IMR-90 (cell line): ENCODE measurements at regions of chr16 and their contacts with region 1.

Region 1: GRCh38 chr16:64455254-64455653 is 666.6 kb downstream of the CDH11 start:
- DNase-seq: peak; percentile 53
- ATAC-seq: peak; percentile 83
- H3K4me3 ChIP-seq: no peak overlapping the region
- H3K27ac ChIP-seq: no peak overlapping the region
- H3K4me1 ChIP-seq: no peaks in the 10 kb centered on the region
- H3K27me3 ChIP-seq: no peaks in the 10 kb centered on the region
- CTCF ChIP-seq: peak; percentile 46
- POLR2A ChIP-seq: no peak
- RAD21 ChIP-seq: peak; percentile 62

Region 2: DNA sequence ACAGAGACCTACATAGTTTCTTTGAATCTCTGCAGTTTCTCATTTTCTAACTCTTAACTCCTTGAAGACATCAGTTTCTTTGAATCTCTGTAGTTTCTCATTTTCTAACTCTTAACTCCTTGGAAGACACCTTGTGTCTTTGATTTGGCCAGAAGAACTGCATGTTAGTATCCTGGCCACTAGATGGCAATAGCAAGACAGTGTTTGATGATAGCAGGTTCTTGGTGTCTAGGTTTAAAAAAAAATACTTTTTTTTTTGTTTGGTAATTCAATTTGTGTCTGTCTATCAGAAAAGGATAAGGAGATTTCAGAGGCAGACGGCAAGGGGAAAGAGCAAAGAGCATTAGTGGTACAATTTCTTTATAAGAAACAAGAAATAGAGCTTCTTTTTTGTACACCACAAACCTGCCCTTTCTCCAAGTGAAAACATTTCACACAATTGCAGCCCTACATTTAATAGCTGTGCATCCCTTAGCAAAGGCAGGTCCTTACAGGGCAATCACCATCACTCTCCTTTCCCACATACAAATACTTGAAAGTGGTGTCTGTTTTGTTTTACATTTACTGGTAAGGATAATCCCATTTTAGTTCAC is 1094.1 kb before region 1 on chr16:
- CTCF ChIA-PET with region 1: no interaction called
- POLR2A ChIA-PET with region 1: no interaction called
- dilution Hi-C with region 1: no loop called
- in situ Hi-C with region 1: loop called (anchors 25 kb)
- intact Hi-C with region 1: loop called (anchors 10 kb)
- DNase-seq: peak; percentile 66
- ATAC-seq: peak; percentile 77
- H3K4me3 ChIP-seq: no peak overlapping the region
- H3K27ac ChIP-seq: no peak overlapping the region
- H3K4me1 ChIP-seq: no peaks in the 10 kb centered on the region
- H3K27me3 ChIP-seq: no peaks in the 10 kb centered on the region
- CTCF ChIP-seq: peak; percentile 78
- POLR2A ChIP-seq: no peak
- RAD21 ChIP-seq: peak; percentile 74

Region 3: DNA sequence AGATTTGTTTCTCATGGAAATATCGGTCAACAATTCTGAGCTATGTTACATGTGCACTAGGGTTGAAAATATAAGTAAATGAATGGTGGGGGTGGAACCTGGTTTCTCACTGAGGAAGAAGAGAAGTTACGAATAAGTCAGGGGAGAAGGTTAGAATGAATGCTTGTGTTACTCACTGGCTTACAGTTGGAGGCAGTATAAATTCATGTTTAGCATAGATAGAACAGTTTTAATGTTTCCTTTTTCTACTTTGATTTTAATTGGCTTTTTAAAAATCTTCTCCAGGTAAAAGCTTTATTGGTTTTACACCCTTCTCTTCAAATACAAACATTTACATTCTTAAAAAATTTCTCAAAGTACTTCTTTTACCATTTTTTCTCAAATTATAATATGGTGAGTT is 447.1 kb before region 1 on chr16:
- CTCF ChIA-PET with region 1: no interaction called
- POLR2A ChIA-PET with region 1: no interaction called
- dilution Hi-C with region 1: no loop called
- in situ Hi-C with region 1: no loop called
- intact Hi-C with region 1: loop called (anchors 10 kb)
- DNase-seq: no peak
- ATAC-seq: no peak
- H3K4me3 ChIP-seq: no peak overlapping the region
- H3K27ac ChIP-seq: no peak overlapping the region
- H3K4me1 ChIP-seq: no peaks in the 10 kb centered on the region
- H3K27me3 ChIP-seq: no peaks in the 10 kb centered on the region
- CTCF ChIP-seq: no peak
- POLR2A ChIP-seq: no peak
- RAD21 ChIP-seq: peak; percentile 24; the same call in 1 of the 2 replicates

Region 4: DNA sequence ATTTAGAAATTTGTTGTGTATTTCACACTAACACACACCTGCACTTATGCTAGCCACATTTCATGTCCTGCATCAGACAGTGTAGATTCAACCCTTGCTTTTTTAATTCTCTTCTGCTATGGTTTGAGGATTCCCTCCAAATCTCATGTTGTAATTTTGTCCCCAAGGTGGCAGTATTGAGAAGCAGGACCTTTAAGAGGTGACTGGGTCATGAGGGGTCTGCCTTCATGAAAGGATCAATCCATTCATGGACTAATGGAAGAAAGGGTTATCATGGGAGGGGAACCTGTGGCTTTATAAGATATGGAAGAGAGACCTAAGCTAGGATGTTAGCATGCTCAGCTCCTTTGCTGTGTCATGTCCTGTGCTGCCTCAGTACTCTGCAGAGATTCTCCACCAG is 365.6 kb before region 1 on chr16:
- CTCF ChIA-PET with region 1: interaction called, 5 read pairs
- POLR2A ChIA-PET with region 1: no interaction called
- dilution Hi-C with region 1: no loop called
- in situ Hi-C with region 1: loop called (anchors 25 kb)
- intact Hi-C with region 1: loop called (anchors 5 kb)
- DNase-seq: peak; percentile 11
- ATAC-seq: peak; percentile 65; the same call in 1 of the 2 replicates
- H3K4me3 ChIP-seq: no peak overlapping the region
- H3K27ac ChIP-seq: no peak overlapping the region
- H3K4me1 ChIP-seq: peaks cover 4% of the 10 kb centered on the region; the same call in 1 of the 2 replicates
- H3K27me3 ChIP-seq: no peaks in the 10 kb centered on the region
- CTCF ChIP-seq: peak; percentile 47
- POLR2A ChIP-seq: no peak
- RAD21 ChIP-seq: peak; percentile 51

Region 5: GRCh38 chr16:64440421-64440831 is 14.8 kb before region 1 on chr16:
- CTCF ChIA-PET with region 1: no interaction called
- POLR2A ChIA-PET with region 1: no interaction called
- dilution Hi-C with region 1: no loop called
- in situ Hi-C with region 1: no loop called
- intact Hi-C with region 1: no loop called
- DNase-seq: peak; percentile 99
- ATAC-seq: peak; percentile 97
- H3K4me3 ChIP-seq: no peak overlapping the region
- H3K27ac ChIP-seq: no peak overlapping the region
- H3K4me1 ChIP-seq: peaks cover 2% of the 10 kb centered on the region
- H3K27me3 ChIP-seq: no peaks in the 10 kb centered on the region
- CTCF ChIP-seq: no peak
- POLR2A ChIP-seq: no peak
- RAD21 ChIP-seq: peak; percentile 29; the same call in 1 of the 2 replicates

Region 6: DNA sequence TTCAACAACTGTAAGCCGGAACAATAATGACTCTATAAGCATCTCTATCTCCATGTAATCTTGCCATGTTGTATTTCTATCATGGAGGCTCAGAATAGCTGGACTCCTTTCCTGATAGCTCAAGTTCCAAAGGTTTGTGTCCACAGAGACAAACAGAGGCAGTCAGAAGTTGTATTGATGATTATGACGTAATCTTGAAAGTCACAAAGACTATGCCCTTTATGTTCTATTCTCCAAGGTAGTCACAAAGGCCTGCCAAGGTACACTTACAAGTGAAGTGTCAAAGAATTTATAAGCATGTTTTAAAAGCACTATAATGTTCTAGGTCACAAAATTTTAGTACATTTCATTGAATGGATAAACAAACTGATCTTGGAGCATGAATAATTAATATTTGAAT is 124.5 kb after region 1 on chr16:
- CTCF ChIA-PET with region 1: no interaction called
- POLR2A ChIA-PET with region 1: no interaction called
- dilution Hi-C with region 1: no loop called
- in situ Hi-C with region 1: no loop called
- intact Hi-C with region 1: no loop called
- DNase-seq: no peak
- ATAC-seq: no peak
- H3K4me3 ChIP-seq: no peak overlapping the region
- H3K27ac ChIP-seq: no peak overlapping the region
- H3K4me1 ChIP-seq: no peaks in the 10 kb centered on the region
- H3K27me3 ChIP-seq: no peaks in the 10 kb centered on the region
- CTCF ChIP-seq: no peak
- POLR2A ChIP-seq: no peak
- RAD21 ChIP-seq: no peak